ENCODE measurements at regions of chr7 and their contacts with region 1.

Region 1: DNA sequence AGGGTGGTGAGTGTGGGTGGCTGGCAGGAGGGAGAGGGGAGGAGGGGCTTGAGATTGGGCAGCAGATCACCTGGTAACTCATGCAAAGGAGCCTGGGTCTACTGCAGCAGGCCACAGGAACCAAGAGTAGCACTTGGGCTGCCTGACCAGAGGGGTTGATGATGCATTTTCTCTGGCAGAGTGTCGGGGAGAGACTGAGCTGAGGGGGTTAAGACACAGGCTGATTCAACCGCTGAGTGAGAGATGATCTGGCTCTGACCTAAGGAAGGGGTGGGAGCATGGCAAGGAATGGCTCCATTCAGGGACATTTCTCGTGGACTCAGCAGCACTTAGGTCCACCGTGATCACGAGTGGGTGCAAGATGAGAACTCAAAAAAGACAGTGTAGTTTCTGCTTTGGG is 115.5 kb upstream of the STK17A start:
- DNase-seq: no peak
- H3K4me3 ChIP-seq: no peak overlapping the region
- H3K27ac ChIP-seq: no peak overlapping the region
- H3K4me1 ChIP-seq: peaks cover 24% of the 10 kb centered on the region
- H3K27me3 ChIP-seq: no peaks in the 10 kb centered on the region
- CTCF ChIP-seq: no peak

Region 2: DNA sequence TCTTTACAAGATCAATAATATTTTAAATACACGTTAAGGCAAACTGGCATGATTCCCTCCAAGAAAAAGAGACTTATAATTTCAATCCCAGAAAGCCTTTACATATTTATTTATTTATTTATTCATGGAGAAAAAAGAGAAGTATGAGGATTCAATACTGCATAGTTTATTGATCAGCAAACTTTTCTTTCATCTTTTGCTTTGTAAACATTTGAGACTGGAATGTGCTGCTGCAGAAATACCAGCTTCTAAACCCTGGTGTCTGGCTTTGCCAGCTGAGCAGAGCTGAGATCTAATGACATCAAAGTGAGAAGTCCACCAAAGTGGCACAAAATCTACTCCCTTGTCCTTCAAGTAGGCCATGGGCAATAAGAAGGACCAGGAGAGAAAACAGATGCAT is 21.9 kb after region 1 on chr7:
- CTCF ChIA-PET with region 1: no interaction called
- POLR2A ChIA-PET with region 1: no interaction called
- intact Hi-C with region 1: loop called (anchors 2 kb)
- DNase-seq: no peak
- H3K4me3 ChIP-seq: no peak overlapping the region
- H3K27ac ChIP-seq: no peak overlapping the region
- H3K4me1 ChIP-seq: no peaks in the 10 kb centered on the region
- H3K27me3 ChIP-seq: no peaks in the 10 kb centered on the region
- CTCF ChIP-seq: no peak